Naive thymus-derived CD4-positive, alpha-beta T cell (primary cell): ENCODE measurements at regions of chr7 and their contacts with region 1.

Region 1: GRCh38 chr7:83655951-83656556 is 7.1 kb upstream of the SEMA3E start:
- DNase-seq: no peak
- ATAC-seq: no peak
- H3K4me3 ChIP-seq: no peak overlapping the region
- H3K4me3 Mint-ChIP-seq: no peak overlapping the region
- H3K27ac ChIP-seq: no peak overlapping the region
- H3K27ac Mint-ChIP-seq: no peak overlapping the region
- H3K4me1 ChIP-seq: no peaks in the 10 kb centered on the region
- H3K4me1 Mint-ChIP-seq: no peaks in the 10 kb centered on the region
- H3K27me3 ChIP-seq: no peaks in the 10 kb centered on the region
- H3K27me3 Mint-ChIP-seq: no peaks in the 10 kb centered on the region

Region 2: DNA sequence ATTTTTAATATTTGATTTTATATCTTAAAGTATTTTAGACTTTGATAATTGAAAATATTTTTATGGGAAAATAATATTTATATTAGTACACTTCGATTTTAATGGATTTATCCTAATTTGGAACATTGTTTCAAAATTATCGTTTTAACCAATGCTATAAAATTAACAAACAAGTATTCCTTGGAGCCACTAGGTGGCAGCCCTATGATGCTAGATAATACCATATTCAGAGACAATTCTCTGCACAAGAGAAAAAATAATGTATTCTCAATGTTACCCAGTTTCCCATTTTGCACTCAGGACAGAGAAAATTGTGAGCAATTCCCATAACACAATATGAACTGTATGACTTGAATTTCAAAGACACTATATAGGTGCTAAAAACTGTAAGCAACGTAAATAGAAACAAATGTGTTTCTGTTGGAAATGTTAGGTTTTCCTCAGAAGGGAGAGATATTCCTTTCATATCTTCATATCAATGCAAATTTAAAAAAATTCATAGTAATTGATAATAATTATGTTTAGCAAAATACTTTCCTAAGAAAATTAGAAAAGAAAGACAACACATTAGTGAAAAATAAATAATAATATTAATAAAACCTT is 245.0 kb before region 1 on chr7:
- CTCF ChIA-PET with region 1: no interaction called
- POLR2A ChIA-PET with region 1: no interaction called
- intact Hi-C with region 1: loop called in 1 of 2 experiments (anchors 1 kb)
- DNase-seq: no peak
- ATAC-seq: no peak
- H3K4me3 ChIP-seq: no peak overlapping the region
- H3K4me3 Mint-ChIP-seq: no peak overlapping the region
- H3K27ac ChIP-seq: no peak overlapping the region
- H3K27ac Mint-ChIP-seq: no peak overlapping the region
- H3K4me1 ChIP-seq: no peaks in the 10 kb centered on the region
- H3K4me1 Mint-ChIP-seq: no peaks in the 10 kb centered on the region
- H3K27me3 ChIP-seq: no peaks in the 10 kb centered on the region
- H3K27me3 Mint-ChIP-seq: no peaks in the 10 kb centered on the region

Region 3: GRCh38 chr7:84497873-84498272 is 841.8 kb after region 1 on chr7:
- CTCF ChIA-PET with region 1: no interaction called
- POLR2A ChIA-PET with region 1: no interaction called
- intact Hi-C with region 1: no loop called
- DNase-seq: no peak
- ATAC-seq: no peak
- H3K4me3 ChIP-seq: no peak overlapping the region
- H3K4me3 Mint-ChIP-seq: no peak overlapping the region
- H3K27ac ChIP-seq: no peak overlapping the region
- H3K27ac Mint-ChIP-seq: no peak overlapping the region
- H3K4me1 ChIP-seq: no peaks in the 10 kb centered on the region
- H3K4me1 Mint-ChIP-seq: no peaks in the 10 kb centered on the region
- H3K27me3 ChIP-seq: no peaks in the 10 kb centered on the region
- H3K27me3 Mint-ChIP-seq: peaks cover 0 to 5% (median 0%) of the 10 kb centered on the region in 5 donors